ENCODE measurements at regions of chr11 and their contacts with region 1.

Region 1: GRCh38 chr11:65095974-65096806 is at the start of gene VPS51:
- DNase-seq: peak; percentile 95
- H3K4me3 Mint-ChIP-seq: peak within 1 kb of the TSS; percentile 95
- H3K27ac Mint-ChIP-seq: peak within 1 kb of the TSS; percentile 94
- H3K4me1 Mint-ChIP-seq: peaks cover 14% of the 10 kb centered on the region
- H3K27me3 Mint-ChIP-seq: no peaks in the 10 kb centered on the region
- total RNA-seq, gene VPS51: 127 and 136 TPM in 2 replicates

Region 2: DNA sequence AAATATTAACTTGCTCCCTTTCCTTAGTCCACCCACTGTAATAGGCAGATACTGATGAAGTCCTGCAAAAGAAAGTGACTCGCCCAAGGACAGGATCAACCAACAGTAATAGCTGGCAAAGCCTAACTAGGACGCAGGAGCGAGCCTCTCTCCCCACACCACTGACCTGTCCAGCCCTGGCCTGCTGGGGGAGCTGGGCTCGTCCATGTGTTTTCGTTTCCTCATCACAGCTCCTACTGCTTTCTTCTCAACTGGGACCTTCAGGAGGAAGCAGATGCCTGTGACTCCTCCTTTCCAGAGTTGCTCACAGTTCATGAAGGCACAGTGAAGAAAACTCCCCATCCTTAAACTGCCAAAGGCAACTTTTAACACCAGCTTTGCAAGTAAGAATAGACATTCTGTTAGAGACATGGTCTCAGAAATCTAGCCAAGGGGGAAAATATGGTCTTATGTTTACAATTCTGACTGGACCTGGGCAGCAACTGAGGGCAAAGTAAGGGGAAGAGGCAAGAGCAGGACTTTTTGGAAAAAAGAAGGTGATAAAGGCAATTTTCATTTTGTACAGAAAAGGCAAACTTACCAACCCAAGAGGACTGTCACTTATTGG is 148.9 kb before region 1 on chr11:
- intact Hi-C with region 1: no loop called
- DNase-seq: no peak
- H3K4me3 Mint-ChIP-seq: no peak overlapping the region
- H3K27ac Mint-ChIP-seq: no peak overlapping the region
- H3K4me1 Mint-ChIP-seq: no peaks in the 10 kb centered on the region
- H3K27me3 Mint-ChIP-seq: peaks cover 30% of the 10 kb centered on the region

Region 3: GRCh38 chr11:65083834-65084597 is 12.2 kb before region 1 on chr11 and contains the starts of genes CDCA5 and ZFPL1:
- intact Hi-C with region 1: loop called (anchors 1 kb)
- DNase-seq: peak; percentile 100
- H3K4me3 Mint-ChIP-seq: peak within 1 kb of the TSS; percentile 99
- H3K27ac Mint-ChIP-seq: peak within 1 kb of the TSS; percentile 99
- H3K4me1 Mint-ChIP-seq: peaks cover 46% of the 10 kb centered on the region
- H3K27me3 Mint-ChIP-seq: peaks cover 2% of the 10 kb centered on the region
- total RNA-seq, gene CDCA5: 94.4 and 95.1 TPM in 2 replicates
- total RNA-seq, gene ZFPL1: 33.3 and 34.7 TPM in 2 replicates

Region 4: DNA sequence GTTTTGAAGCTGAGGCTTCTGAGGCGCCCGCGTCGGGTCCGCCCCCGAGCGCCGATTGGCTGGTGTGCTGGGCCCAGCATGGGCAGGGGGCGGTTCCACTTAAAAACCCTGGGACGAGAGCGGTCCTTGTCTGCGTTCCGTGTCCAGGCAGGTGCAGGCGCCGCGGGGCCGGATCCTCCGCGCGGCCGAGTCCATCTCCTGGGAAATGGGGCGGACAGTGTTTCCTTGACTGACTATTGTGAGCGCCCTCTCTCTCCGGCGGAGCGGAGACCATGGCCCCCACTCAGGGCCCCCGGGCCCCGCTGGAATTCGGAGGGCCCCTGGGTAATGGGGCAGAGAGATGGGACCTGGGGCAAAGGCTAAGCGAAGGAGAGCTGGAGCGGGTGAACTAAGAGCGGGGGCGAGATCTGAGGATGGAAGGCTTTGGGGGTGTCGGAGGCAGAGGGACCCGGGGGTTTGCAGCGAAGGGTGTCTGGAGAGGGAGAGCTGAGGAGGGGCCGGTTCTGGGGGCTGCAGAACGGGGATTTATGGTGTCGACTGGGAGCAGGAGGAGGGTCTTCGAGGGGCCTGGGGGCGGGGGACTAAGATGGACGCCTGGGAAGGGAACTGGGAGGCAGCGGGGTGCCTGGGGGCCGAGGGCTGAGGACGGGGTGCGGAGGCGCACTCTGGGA is 15.7 kb after region 1 on chr11 and contains the start of gene TM7SF2:
- intact Hi-C with region 1: loop called (anchors 1 kb)
- DNase-seq: peak; percentile 98
- H3K4me3 Mint-ChIP-seq: peak within 1 kb of the TSS; percentile 98
- H3K27ac Mint-ChIP-seq: peak within 1 kb of the TSS; percentile 93
- H3K4me1 Mint-ChIP-seq: peaks cover 25% of the 10 kb centered on the region
- H3K27me3 Mint-ChIP-seq: no peaks in the 10 kb centered on the region
- total RNA-seq, gene TM7SF2: 28.2 and 28.9 TPM in 2 replicates

Region 5: DNA sequence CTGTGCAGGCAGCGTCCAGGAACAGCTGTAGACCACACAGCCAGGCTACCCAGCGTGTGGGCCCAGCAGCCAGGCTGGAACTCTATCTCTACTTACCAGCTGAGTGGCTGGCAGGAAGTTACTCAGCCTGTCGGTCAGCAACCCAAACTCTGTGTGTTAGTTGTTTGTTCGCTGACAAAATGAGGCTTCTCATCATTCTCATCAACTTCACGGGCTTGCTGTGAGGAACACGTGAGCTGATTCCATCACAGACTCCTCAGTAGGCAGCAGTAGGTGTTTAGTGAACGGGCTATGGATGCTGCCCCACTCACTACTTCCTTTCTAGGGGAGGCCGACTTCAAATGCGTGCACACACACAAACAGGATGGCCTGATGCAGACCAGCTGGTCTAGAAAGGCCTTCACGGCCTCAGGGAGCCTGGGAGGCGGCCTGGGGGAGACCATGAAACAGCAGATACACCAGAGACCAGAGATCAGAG is 73.0 kb after region 1 on chr11:
- intact Hi-C with region 1: no loop called
- DNase-seq: peak; percentile 62
- H3K4me3 Mint-ChIP-seq: no peak overlapping the region
- H3K27ac Mint-ChIP-seq: peak overlapping the region; percentile 87
- H3K4me1 Mint-ChIP-seq: peaks cover 10% of the 10 kb centered on the region
- H3K27me3 Mint-ChIP-seq: peaks cover 3% of the 10 kb centered on the region